ENCODE measurements at regions of chr14 and their contacts with region 1.

Region 1: DNA sequence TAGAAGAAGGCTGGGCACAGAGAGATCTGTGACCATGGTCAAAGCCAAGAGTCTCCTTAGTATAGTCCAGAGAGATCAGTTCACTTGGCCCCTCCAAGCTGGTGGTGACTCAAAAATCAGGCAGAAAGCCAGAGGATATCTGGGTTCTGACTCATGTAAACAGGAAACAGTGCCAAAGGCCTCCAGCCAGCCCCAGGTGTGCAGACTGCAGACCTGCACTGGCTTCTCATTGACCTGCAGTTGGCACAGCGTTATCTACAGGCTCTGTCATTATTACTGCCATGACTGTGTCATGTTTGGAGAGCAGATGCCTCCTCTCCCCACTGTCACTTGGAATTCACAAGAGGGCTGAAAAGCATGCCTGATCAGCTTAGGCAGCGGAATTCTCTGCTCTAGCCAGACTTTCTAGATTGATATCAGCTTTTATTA is 295.8 kb upstream of the PRKD1 start:
- DNase-seq: peak; percentile 95
- ATAC-seq: peak; percentile 85
- H3K4me3 ChIP-seq: no peak overlapping the region
- H3K27ac ChIP-seq: no peak overlapping the region
- H3K4me1 ChIP-seq: peaks cover 16% of the 10 kb centered on the region
- H3K27me3 ChIP-seq: no peaks in the 10 kb centered on the region
- CTCF ChIP-seq: no peak
- POLR2A ChIP-seq: no peak
- RAD21 ChIP-seq: no peak

Region 2: DNA sequence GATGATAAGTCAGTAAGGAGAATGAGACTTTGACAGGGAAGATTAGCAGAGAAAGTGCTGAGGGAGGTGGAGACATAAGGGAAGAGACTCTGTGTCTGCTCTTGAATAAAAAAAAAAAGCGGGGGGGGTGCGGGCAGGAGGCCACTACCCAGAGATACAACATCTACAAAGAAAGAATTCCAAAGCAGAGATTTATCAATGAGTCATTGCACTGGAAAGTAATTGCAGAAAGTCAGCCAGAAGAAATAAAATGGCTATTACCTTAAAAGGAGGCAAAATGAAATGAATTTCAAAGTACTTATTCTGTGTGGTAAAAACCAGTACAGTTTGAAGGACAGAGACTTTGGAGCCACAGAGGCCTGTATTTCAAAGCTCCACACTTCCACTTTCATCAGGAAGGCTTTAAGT is 28.7 kb before region 1 on chr14:
- CTCF ChIA-PET with region 1: interaction called, 5 read pairs
- POLR2A ChIA-PET with region 1: no interaction called
- dilution Hi-C with region 1: no loop called
- in situ Hi-C with region 1: no loop called
- intact Hi-C with region 1: loop called (anchors 1 kb)
- DNase-seq: peak; percentile 91
- ATAC-seq: peak; percentile 55
- H3K4me3 ChIP-seq: no peak overlapping the region
- H3K27ac ChIP-seq: peak overlapping the region; percentile 82
- H3K4me1 ChIP-seq: peaks cover 13% of the 10 kb centered on the region
- H3K27me3 ChIP-seq: no peaks in the 10 kb centered on the region
- CTCF ChIP-seq: no peak
- POLR2A ChIP-seq: no peak
- RAD21 ChIP-seq: no peak

Region 3: GRCh38 chr14:30283826-30284446 is 60.5 kb after region 1 on chr14:
- CTCF ChIA-PET with region 1: no interaction called
- POLR2A ChIA-PET with region 1: no interaction called
- dilution Hi-C with region 1: no loop called
- in situ Hi-C with region 1: no loop called
- intact Hi-C with region 1: loop called (anchors 2 kb)
- DNase-seq: peak; percentile 53
- ATAC-seq: peak; percentile 69
- H3K4me3 ChIP-seq: no peak overlapping the region
- H3K27ac ChIP-seq: no peak overlapping the region
- H3K4me1 ChIP-seq: no peaks in the 10 kb centered on the region; the same call in 1 of the 2 replicates
- H3K27me3 ChIP-seq: no peaks in the 10 kb centered on the region; the same call in 1 of the 2 replicates
- CTCF ChIP-seq: peak; percentile 69
- POLR2A ChIP-seq: no peak
- RAD21 ChIP-seq: peak; percentile 55